ENCODE measurements at regions of chr19 and their contacts with region 1.

Region 1: DNA sequence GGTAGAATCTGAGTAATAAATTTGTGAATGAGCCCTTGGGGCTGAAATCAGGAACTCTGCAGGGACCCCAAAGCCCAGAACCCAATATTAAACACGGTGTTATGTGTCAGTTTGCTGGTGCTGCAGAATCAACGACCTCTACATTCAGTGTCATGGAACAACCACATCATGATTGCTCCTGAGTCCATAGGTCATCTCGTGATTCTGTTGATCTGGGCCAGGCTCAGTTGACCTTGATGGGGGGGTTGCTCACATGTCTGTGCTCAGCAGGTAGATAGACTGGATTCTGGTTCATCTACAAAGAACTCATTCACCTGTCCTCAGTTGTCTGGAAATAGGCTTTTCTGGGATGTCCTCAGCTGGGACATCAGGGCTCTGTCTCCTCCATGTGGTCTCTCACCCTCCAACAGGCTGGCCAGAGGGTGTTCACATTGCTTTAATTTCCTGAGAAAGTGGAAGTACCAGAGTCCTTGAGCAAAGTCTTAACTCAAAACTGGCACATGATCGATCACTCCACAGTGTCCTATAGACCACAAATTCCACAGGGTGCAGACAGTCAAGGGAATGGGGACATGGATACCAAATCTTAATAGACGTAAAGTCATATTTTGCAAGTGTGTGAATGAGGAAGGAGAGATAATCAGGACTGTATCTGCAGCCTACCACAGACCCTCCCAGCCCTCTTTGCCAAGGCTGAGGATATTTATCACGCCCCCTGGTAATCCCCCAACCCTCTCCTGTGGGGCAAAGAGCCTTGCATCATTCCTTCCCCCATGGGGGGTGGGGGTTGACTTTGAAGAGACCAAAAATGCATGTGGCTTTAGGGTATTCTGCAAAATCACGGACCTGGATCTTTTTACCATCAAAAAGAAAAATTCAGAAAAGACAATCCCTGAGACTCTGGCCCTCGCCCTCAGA is 39.3 kb upstream of the IGFL1 start:
- DNase-seq: no peak
- ATAC-seq: no peak
- H3K4me3 ChIP-seq: no peak overlapping the region
- H3K4me3 Mint-ChIP-seq: no peak overlapping the region
- H3K27ac ChIP-seq: no peak overlapping the region
- H3K27ac Mint-ChIP-seq: no peak overlapping the region
- H3K4me1 ChIP-seq: no peaks in the 10 kb centered on the region
- H3K4me1 Mint-ChIP-seq: peaks cover 0 to 2% (median under 1%) of the 10 kb centered on the region in 7 donors
- H3K27me3 ChIP-seq: peaks cover 2 to 6% of the 10 kb centered on the region in 2 donors
- H3K27me3 Mint-ChIP-seq: peaks cover 33 to 45% (median 41%) of the 10 kb centered on the region in 5 donors

Region 2: GRCh38 chr19:46016426-46017094 is 173.7 kb before region 1 on chr19:
- CTCF ChIA-PET with region 1: no interaction called
- POLR2A ChIA-PET with region 1: no interaction called
- intact Hi-C with region 1: no loop called
- DNase-seq: peak; percentile 57 to 84 (median 75)
- ATAC-seq: peak; percentile 92
- H3K4me3 ChIP-seq: peak overlapping the region; percentile 62
- H3K4me3 Mint-ChIP-seq: peak overlapping the region; percentile 85 to 97 (median 92)
- H3K27ac ChIP-seq: peak overlapping the region; percentile 55
- H3K27ac Mint-ChIP-seq: peak overlapping the region in 7 of 9 donors; percentile 28 to 82 (median 50)
- H3K4me1 ChIP-seq: peaks cover 0 to 7% of the 10 kb centered on the region in 2 donors
- H3K4me1 Mint-ChIP-seq: peaks cover 11 to 23% (median 18%) of the 10 kb centered on the region in 7 donors
- H3K27me3 ChIP-seq: peaks cover 0 to 6% of the 10 kb centered on the region in 2 donors
- H3K27me3 Mint-ChIP-seq: peaks cover 5 to 17% (median 12%) of the 10 kb centered on the region in 5 donors

Region 3: DNA sequence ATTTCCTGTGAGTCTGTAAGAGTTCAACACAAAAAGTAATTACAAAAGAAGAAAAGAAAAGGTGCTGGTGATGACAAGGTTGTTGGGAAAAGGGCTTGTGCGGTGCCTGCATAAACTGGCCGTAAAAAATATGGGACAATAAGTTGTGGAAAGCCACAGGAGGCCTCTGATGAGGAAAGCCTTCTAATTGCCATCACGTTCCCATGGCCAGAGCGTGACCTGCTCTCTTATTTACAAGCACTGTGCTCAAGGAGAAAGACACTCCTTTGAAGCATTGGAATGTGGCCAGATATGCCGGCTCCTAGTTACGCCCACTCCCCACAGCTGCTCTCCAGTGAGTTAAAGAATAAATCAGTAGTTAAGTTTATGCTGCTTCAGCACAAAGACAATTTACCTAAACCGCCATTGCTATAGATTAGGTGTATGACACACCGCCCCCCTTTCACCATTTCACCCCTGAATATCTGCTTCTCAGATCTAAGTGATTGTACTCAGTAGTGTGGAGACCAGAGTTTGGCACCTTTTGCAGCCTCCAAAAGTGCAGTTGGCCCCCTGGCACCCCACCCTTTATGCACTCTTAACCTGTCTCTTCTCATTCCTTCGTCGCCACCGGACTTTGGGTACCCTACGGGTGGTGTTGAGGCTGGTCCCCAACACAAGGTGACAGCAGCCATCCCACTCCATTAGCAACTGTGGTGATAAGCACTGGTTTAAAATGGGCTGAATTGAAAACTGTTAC is 159.2 kb before region 1 on chr19:
- CTCF ChIA-PET with region 1: no interaction called
- POLR2A ChIA-PET with region 1: no interaction called
- intact Hi-C with region 1: loop called in 1 of 2 experiments (anchors 1 kb)
- DNase-seq: no peak
- ATAC-seq: no peak
- H3K4me3 ChIP-seq: no peak overlapping the region
- H3K4me3 Mint-ChIP-seq: no peak overlapping the region
- H3K27ac ChIP-seq: no peak overlapping the region
- H3K27ac Mint-ChIP-seq: no peak overlapping the region
- H3K4me1 ChIP-seq: peaks cover 0 to 5% of the 10 kb centered on the region in 2 donors
- H3K4me1 Mint-ChIP-seq: peaks cover 12 to 17% (median 14%) of the 10 kb centered on the region in 7 donors
- H3K27me3 ChIP-seq: no peaks in the 10 kb centered on the region
- H3K27me3 Mint-ChIP-seq: peaks cover 6 to 28% (median 20%) of the 10 kb centered on the region in 5 donors

Region 4: DNA sequence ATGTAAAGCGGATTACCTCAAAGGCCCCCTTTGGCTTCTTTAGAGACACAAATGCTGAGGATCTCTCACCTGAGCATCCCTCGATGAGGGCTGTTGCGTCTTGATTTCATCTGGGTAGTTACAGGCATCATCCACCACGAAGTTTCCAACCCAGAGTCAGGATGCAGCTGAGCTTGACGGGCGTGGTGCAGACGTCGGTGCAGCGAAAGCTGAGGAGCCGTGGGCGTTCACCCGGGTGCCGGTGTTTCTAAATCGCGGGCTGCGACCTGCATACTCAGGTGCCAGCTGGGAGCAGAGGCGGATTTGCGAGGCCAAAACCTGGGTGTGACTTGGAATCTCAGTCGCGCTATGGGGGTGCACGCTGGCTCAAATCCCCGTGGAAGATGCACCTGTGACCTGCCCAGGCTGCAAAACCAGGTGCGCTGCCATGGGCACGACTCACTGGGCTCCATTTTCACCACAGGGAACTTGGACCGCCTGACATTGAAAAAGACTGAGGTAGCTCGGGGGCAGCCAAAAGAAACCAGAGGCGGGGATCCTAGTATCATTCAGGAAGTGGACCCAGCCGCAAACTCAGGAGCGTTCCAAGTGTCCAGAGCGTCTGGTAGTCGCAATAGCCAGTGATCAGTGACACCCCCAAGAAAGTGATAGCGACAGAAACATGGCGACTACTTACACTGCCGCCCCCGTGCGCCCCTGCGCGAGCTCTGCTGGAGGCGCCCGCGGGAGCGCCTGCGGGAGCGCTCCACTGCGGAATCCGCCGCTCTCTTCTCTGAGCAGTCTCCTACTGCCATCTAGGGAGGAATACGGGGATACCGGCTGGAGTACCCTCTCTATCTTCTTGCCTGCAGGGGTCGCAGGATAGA is 113.0 kb before region 1 on chr19:
- CTCF ChIA-PET with region 1: no interaction called
- POLR2A ChIA-PET with region 1: no interaction called
- intact Hi-C with region 1: loop called in 1 of 2 experiments (anchors 1 kb)
- DNase-seq: peak in 2 of 9 donors; percentile 6 to 14
- ATAC-seq: peak; percentile 68
- H3K4me3 ChIP-seq: no peak overlapping the region
- H3K4me3 Mint-ChIP-seq: peak overlapping the region in 8 of 10 donors; percentile 16 to 61 (median 41)
- H3K27ac ChIP-seq: no peak overlapping the region
- H3K27ac Mint-ChIP-seq: no peak overlapping the region
- H3K4me1 ChIP-seq: no peaks in the 10 kb centered on the region
- H3K4me1 Mint-ChIP-seq: peaks cover 3 to 15% (median 9%) of the 10 kb centered on the region in 7 donors
- H3K27me3 ChIP-seq: peaks cover 0 to 12% of the 10 kb centered on the region in 2 donors
- H3K27me3 Mint-ChIP-seq: peaks cover 73 to 87% (median 77%) of the 10 kb centered on the region in 5 donors

Measured in naive thymus-derived CD4-positive, alpha-beta T cell (primary cell).